ENCODE measurements at regions of chr1 and their contacts with region 1.

Region 1: DNA sequence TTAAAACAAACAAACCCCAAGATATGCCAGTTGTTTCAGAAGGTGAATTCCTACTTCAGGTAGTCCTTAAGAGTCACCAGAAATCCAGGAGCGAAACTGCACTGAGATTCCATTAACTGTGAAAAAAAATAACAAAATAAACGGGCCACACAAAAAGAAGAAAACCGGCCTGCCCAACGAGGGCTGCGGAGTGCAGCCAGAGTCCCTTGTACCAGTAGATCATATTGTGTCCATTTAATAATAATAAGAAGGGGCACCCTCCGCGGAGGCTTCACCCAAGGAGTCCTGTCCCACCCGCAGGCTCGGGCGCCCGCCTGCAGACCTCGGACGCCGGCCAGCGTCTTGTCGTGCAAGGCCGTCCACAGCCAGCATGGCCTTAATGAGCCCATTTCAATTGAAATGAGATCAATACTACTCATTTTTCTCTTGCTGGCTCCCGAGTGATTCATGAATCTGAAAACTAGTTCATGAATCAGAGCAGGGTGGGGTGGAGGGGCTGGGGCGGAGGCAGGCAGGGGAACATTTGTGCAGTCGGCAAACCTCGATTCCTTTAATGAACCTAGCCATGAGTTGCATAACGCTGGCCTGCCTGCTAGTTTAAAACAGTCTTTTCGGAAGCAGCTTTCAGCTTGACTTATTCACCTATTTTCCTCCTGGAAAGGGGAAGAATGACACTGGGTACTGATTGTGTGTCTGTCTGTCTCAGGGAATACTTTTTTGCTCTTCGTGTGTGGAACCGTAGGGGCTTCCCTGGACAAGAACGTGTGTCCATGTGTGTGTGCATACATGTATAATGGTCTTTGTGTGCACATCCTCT is 113.1 kb upstream of the IRF2BP2 start:
- DNase-seq: peak; percentile 92
- ATAC-seq: peak; percentile 68
- H3K4me3 Mint-ChIP-seq: peak overlapping the region; percentile 64
- H3K27ac Mint-ChIP-seq: peak overlapping the region; percentile 97
- H3K4me1 Mint-ChIP-seq: peaks cover 66% of the 10 kb centered on the region
- H3K27me3 Mint-ChIP-seq: no peaks in the 10 kb centered on the region

Region 2: DNA sequence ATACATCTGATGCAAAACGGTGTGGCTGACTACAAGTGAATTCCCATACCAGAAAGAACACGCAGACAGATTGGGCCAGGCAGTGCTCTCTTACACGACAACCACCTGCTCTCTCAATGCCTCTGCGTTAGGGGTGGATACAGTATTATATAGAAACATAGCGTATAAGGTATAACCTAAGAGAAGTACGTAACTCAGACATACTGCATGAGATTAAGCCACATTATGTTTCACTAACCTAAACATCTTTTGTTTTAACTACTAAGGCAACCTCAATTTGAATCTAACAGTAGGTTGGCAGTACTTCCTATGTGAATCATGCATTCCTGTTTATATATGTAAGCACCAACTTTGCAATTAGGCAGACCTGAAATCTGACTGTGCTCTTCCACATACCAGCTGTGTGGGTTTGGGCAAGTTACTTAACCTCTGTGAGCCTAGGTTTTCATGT is 408.0 kb before region 1 on chr1:
- CTCF ChIA-PET with region 1: interaction called, 4 read pairs
- POLR2A ChIA-PET with region 1: no interaction called
- intact Hi-C with region 1: loop called in 1 of 2 experiments (anchors 2 kb)
- DNase-seq: peak; percentile 56
- ATAC-seq: peak; percentile 84
- H3K4me3 Mint-ChIP-seq: peak overlapping the region; percentile 22
- H3K27ac Mint-ChIP-seq: peak overlapping the region; percentile 89
- H3K4me1 Mint-ChIP-seq: peaks cover 63% of the 10 kb centered on the region
- H3K27me3 Mint-ChIP-seq: peaks cover 1% of the 10 kb centered on the region

Region 3: DNA sequence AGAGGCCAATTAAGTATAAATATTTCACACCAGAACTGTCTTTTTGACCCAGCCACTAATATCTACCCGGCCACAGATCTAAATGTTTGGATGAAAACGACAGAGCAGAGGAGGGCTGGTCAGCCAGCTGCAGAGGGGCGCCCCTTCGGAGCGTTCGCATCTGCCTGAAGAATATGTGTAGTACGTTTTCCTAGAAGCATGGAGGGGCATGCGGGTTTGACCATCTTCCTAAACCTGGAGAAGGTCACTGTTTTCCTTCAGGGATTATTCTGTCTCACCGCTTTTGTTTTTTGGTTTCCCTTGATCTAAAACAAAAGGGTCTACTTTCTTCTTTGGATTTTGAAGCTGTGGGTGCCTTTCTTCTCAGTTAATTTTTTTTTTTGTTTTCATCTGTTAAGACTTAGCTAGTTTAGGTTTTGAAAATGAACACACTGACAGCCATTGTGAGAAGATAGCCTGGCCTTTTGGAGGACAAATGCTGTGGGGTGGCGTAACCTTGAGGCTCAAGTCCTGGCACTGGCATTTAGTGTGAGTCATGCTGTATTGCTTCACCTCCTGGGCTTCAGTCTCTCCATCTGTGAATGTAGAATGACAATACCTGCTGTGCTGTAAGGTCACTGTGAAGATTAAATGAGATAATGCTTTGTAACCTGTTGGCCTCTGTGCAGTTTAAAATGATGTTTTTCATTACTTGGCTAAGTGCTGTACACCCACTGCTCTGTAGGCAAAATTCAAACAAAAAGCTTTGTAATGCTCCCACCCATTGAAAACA is 39.1 kb before region 1 on chr1:
- CTCF ChIA-PET with region 1: no interaction called
- POLR2A ChIA-PET with region 1: no interaction called
- intact Hi-C with region 1: loop called in 1 of 2 experiments (anchors 5 kb)
- DNase-seq: no peak
- ATAC-seq: no peak
- H3K4me3 Mint-ChIP-seq: no peak overlapping the region
- H3K27ac Mint-ChIP-seq: no peak overlapping the region
- H3K4me1 Mint-ChIP-seq: no peaks in the 10 kb centered on the region
- H3K27me3 Mint-ChIP-seq: no peaks in the 10 kb centered on the region

Measured in activated CD4-positive, alpha-beta T cell treated with anti-CD3 and anti-CD28 coated beads for 36 hours (primary cell).